ENCODE measurements at regions of chr2 and their contacts with region 1.

Region 1: DNA sequence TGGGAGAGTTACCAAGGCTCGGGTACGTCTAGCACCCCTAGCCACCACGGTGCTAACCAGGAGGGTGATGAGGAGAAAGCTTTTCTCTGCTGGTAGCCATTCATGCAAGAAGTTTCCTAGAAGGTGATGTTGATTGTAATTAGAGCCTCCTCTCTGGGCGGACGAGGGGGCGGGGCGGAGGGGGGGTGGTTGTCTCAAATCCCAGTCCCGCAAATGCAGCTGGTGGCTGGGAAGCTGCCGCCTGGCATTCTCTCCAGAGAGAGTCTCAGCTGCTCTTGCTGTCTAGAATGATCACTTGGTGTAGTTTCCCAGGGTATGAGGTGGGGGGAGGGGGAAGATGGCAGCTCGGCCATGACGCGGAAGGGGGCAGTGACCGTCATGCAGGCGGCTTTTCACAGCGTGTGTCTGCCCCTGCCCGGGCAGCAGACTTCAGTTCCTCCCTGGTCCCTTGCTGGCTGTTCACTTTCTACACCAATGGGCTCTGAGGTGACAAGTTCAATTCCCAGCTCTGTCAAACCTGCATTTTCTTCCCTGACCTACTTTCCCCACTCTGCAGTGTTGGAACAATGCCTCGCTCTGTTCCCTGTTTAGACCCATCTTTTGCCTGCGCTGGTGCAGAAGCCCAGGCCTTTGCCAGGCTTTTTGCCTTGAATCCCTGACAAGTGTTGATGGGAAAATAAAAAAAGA is 61.5 kb upstream of the KLF7 start:
- DNase-seq: peak; percentile 40 to 78
- ATAC-seq: peak; percentile 80 to 97 (median 92)
- H3K4me3 ChIP-seq: peak overlapping the region; percentile 51
- H3K27ac ChIP-seq: peak overlapping the region; percentile 60
- H3K4me1 ChIP-seq: peaks cover 20% of the 10 kb centered on the region
- H3K27me3 ChIP-seq: no peaks in the 10 kb centered on the region
- CTCF ChIP-seq: no peak

Region 2: DNA sequence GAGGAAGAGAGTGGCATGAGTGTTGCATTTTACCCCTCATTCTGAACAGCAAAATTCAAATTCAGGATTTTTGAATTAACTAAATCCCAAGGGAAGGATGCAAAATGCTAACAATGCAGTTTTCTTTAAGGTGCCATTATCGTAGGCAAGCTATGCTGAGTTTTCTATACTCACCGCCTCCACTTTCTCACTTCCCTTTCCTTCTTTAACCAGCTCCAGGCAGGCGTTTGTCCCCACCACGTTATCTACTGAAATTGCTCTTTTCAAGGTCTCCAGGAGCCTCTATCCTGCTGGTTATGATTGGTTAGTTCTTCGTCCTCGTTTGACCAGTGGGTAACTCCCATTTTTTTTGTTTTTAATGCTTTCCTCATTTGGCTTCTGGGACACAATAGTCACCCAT is 289.6 kb before region 1 on chr2:
- intact Hi-C with region 1: no loop called
- DNase-seq: no peak
- ATAC-seq: no peak
- H3K4me3 ChIP-seq: no peak overlapping the region
- H3K27ac ChIP-seq: no peak overlapping the region
- H3K4me1 ChIP-seq: no peaks in the 10 kb centered on the region
- H3K27me3 ChIP-seq: no peaks in the 10 kb centered on the region
- CTCF ChIP-seq: no peak

Region 3: GRCh38 chr2:207046724-207047123 is 180.5 kb before region 1 on chr2:
- intact Hi-C with region 1: no loop called
- DNase-seq: no peak
- ATAC-seq: peak in 2 of 4 donors; percentile 22 to 61
- H3K4me3 ChIP-seq: no peak overlapping the region
- H3K27ac ChIP-seq: no peak overlapping the region
- H3K4me1 ChIP-seq: no peaks in the 10 kb centered on the region
- H3K27me3 ChIP-seq: no peaks in the 10 kb centered on the region
- CTCF ChIP-seq: no peak

Region 4: DNA sequence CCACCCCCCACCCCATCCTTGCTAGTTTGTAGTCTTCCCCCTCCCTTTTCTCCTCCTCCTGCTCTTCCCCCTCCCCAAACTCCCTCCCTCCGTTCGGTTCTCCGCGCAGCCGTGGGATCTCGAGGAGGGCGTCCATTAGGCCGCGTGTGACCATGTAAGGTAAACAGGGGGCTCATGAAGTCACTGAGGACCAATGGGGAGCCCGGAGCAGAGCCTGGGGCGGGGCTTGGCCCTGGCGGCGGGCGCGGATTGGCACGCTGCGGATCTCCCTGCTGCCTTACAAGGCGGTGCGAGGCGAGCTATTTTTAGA is 61.2 kb before region 1 on chr2:
- intact Hi-C with region 1: loop called in 1 of 2 experiments (anchors 5 kb)
- DNase-seq: peak; percentile 98 to 99
- ATAC-seq: peak; percentile 90 to 97 (median 96)
- H3K4me3 ChIP-seq: peak overlapping the region; percentile 88
- H3K27ac ChIP-seq: peak overlapping the region; percentile 100
- H3K4me1 ChIP-seq: peaks cover 25% of the 10 kb centered on the region
- H3K27me3 ChIP-seq: no peaks in the 10 kb centered on the region
- CTCF ChIP-seq: no peak

Measured in psoas muscle (tissue), 8 donors.